ENCODE measurements at regions of chr4 and their contacts with region 1.

Region 1: DNA sequence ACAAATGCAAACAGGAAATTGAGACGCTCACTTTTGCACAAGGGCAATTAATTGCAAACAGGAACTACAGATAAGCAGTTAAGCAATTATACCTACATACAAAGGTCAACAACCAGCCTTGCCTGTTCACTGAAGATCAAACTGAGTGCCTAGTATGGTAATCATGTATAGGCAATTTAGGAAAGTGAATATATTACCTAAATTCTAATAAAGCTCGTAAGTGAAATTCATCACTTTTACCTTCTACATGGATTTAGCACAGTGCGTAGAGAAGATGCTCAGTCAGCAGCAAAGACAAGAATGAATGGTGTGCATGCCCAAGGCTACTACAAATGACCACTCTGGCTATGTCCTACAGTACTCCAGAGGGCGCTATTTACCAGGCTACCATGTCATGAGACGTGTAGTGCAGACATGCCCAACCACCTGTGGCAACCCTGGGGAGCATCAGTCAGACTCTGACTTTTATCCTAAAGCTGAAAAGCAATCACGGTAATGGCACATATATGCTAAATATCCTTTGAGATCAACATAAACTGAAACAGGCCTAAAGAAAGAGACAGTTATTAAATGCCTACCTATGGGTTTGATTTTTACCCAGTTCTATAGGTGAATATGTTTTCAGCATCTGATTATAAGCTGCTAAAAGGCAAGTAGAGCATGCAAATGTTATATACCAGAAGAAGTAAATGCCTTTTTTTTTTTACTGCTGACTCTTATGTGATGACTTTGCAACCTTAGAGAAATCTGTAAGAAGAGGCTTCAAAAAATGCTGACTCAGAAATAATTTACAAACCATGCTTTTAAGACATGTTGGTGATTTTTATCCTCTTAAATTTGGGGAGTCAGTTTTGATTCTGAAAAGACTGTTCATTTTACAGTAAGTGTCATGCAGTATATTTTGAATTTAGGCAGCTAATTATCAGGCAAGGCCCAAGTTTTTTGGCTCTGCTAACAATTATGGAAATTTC is 178.0 kb downstream of the PPP3CA start:
- DNase-seq: no peak
- ATAC-seq: peak; percentile 90

Region 2: DNA sequence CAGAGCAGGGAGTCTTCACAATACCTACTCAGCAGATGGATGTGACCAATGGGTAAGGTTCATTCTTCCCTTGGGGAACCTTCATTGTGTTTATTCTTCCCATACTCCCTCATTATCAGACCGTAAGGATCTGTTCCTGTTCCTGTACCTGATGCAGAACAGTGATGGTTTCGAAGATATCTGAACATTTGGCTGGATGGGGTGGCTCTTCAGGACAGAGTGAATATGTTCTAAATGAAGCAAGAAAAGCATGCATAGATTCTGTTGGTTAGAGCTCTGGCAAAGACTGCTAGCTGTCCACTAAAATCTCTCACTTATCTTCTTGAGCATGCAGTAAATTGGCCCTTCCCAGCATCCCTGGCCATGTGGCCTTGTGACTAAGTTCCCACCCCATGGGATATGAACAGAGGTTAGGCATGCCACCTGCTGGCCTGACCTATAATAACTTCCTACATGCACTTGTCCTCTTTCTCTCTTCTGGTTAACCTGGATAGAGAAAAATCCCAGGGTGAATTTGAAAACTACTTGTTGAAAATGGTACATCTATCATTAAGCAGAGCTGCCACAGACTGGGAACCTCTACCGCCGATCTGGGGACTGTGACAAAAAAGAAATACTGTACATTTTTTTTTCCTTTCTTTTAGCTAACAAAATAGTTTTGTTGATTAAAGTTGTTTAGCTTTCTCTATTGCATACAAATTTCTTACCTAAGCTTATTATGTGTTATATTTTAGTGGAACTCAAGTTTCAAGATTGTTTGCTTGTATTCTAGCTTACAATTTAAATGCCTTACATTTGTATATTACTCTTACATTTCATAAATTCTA is 561.2 kb after region 1 on chr4:
- intact Hi-C with region 1: loop called (anchors 2 kb)
- DNase-seq: no peak
- ATAC-seq: peak; percentile 89

Measured in Right ventricle myocardium inferior (tissue), 1 donor.